ENCODE measurements at regions of chr1 and their contacts with region 1.

Region 1: DNA sequence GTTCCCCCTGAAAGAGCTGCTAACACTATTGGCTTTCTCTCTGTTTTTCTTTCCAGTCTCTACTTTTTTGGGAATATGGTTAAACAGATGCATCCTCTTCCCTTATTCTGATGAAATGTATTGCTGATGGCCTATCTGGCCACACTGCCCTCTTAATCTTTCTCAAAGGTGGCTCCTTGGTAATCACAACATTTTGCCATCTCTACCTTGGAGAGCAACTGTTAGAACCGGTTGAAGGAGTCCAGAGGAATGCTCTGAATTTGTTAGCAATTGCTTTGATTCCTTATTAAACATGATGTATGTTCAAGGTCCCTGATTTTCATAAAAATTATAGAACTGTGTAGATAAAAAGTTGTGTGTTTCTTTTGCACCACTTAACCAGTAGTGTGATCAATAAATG is 50.1 kb upstream of the ARID1A start:
- DNase-seq: no peak
- ATAC-seq: no peak
- H3K4me3 Mint-ChIP-seq: no peak overlapping the region
- H3K27ac Mint-ChIP-seq: no peak overlapping the region
- H3K4me1 Mint-ChIP-seq: no peaks in the 10 kb centered on the region
- H3K27me3 Mint-ChIP-seq: no peaks in the 10 kb centered on the region

Region 2: DNA sequence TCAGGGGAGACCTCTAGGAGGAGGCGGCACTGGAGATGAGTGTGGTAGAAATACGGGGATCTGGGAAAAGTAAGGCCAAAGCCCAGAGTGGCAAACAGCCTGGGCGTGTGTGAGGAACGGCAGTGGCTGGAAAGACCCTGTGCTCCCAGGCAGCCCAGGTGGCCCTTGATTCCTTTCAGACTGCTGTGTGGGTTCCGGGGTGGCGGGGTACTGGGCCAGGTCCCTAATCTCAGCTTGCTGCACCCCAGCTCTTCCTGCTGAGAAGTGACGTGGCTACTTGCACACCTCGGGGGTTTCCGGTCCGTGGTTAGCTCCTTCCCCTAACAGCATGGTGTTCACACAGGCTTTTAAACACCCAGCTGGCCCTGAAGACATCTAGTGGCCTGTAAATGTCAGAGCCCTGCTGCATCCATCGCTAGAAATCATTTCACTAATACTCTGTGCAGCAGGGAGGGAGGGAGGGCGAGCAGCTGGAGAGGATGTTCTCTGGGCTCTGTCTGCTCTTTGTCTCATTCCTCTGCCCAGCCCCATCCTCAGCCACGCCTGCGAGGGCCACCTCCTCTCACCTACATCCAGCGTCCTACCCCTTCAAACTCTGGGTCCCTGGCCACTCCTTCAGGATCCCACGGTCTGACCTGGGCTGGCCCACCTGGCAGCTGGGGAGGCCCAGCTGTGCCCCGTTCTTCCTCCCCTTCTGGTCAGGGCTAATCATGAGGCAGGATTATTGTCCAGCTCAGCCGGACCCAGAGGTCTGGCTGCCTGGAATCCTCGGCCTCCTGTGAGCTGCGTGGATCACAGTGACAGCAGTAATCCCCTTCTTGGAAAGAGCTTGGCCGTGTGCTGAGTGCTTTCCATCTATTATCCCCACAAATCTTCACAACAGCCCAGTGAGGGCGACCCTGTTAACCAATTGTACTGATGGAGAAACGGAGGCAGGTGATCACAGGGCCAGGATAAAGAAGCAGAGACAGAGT is 188.0 kb after region 1 on chr1:
- CTCF ChIA-PET with region 1: no interaction called
- POLR2A ChIA-PET with region 1: interaction called, 10 read pairs
- intact Hi-C with region 1: no loop called
- DNase-seq: peak; percentile 93
- ATAC-seq: peak; percentile 95
- H3K4me3 Mint-ChIP-seq: peak overlapping the region; percentile 70
- H3K27ac Mint-ChIP-seq: peak overlapping the region; percentile 99
- H3K4me1 Mint-ChIP-seq: peaks cover 69% of the 10 kb centered on the region
- H3K27me3 Mint-ChIP-seq: no peaks in the 10 kb centered on the region